ENCODE measurements at regions of chr15 and their contacts with region 1.

Region 1: DNA sequence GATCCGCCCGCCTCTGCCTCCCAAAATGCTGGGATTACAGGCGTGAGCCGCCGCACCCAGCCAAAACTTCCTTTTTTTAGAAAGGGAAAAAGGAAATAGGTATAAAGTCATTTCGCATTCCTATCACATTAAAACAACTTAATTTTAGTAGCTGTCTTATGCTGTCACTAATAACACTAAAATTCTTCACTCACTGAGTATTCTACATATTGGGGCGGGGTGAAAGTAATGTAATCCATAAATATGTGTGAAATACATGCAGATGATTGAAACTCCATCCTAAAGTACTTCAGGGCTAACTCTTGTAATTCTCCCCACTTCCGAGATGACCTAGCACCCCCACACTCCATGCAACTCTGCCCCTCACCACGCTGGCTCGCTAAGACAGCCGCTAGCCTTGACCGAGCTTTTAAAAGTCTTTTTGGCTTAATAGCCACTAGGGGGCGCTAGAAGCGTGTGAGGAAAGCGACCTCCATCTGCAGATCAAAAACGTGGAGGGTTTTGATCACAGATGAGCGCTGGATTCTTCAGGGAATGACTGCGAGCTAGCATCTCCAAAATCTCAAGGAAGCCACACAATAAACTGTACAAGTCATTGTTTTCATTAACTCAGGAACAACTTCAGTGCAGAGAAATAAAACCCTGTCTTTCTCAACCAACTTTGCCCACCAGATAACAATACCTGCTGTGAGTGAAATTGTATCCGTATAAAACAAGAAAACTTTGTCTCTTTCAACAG is 129.3 kb upstream of the IGF1R start:
- DNase-seq: peak; percentile 56
- H3K4me3 Mint-ChIP-seq: no peak overlapping the region
- H3K27ac Mint-ChIP-seq: no peak overlapping the region
- H3K4me1 Mint-ChIP-seq: peaks cover 4% of the 10 kb centered on the region
- H3K27me3 Mint-ChIP-seq: peaks cover 4% of the 10 kb centered on the region

Region 2: GRCh38 chr15:97189162-97189780 is 1329.7 kb before region 1 on chr15:
- CTCF ChIA-PET with region 1: no interaction called
- POLR2A ChIA-PET with region 1: no interaction called
- intact Hi-C with region 1: no loop called
- DNase-seq: no peak
- H3K4me3 Mint-ChIP-seq: no peak overlapping the region
- H3K27ac Mint-ChIP-seq: no peak overlapping the region
- H3K4me1 Mint-ChIP-seq: no peaks in the 10 kb centered on the region
- H3K27me3 Mint-ChIP-seq: no peaks in the 10 kb centered on the region

Region 3: DNA sequence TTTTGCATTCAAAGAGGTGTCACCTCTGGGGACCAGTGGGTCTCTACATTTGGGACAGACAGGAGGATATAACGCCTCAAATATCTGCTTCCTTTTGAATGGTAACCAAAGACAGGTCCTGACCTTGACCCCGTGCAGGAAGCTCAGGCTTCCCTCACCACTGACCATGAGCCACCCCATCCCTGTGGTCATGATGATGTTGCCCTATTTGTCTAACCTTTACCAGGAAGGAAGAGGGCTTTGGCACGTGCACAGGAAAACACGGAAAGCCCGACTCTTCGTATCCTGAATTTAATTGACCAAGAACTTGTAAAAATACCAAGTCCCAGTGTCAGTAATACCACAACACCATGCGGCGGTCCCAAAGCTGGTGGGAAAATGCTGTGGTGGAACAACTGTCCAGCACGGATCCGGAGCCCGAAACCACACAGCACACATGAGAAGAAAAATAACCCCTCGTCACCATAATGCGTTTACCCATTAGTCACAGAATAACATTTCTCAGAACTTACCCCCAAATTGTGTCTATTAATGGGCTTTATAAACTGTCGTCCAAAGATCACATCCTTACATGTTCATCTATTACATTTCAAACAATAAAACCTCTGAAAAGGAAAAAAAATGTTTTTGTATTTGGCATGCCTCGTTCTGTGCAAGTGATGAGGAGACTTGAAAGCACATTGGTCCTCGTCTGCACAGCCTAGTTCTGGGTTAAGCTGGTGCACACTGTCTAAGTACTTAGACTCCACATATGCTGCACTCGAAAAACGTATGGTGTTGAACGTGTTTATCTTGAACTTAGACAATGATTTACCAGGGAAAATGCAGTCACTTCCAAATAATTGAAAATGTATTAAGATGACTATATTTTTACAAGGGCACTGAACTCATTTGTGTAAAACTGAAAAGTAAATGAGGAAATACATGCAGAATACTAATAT is 10.5 kb after region 1 on chr15:
- CTCF ChIA-PET with region 1: interaction called, 16 read pairs
- POLR2A ChIA-PET with region 1: interaction called, 3 read pairs
- intact Hi-C with region 1: no loop called
- DNase-seq: no peak
- H3K4me3 Mint-ChIP-seq: no peak overlapping the region
- H3K27ac Mint-ChIP-seq: no peak overlapping the region
- H3K4me1 Mint-ChIP-seq: peaks cover 4% of the 10 kb centered on the region
- H3K27me3 Mint-ChIP-seq: peaks cover 18% of the 10 kb centered on the region

Region 4: DNA sequence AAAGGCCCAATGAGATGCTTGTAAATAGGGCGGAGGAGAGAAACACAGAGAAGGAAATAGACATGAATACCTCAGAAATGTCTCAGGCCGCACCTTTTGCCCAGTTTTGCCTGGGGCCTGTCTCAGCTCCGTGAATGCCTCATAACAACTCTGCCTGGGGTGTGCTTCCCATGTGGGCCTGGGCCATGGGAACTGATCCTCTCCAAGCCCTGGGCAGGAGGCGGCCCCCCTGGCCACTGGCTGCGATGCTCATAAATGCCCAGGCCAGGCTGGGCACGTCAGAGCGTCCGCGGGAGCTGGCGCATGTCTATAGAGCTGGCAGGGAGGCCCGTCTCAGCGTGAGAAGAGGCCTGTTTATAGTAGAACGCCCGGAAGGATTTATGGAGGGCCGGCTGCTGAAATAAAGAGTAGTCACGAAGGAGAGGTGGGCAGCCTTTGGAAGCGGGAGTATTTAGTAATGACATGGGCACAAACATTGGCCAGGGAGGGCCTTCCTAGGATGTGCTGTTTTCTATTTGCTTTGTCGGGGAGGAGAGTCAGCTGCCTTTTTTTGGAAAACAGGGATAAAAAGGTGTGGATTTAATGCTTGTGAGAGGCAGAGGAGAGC is 43.4 kb after region 1 on chr15:
- CTCF ChIA-PET with region 1: interaction called, 10 read pairs
- POLR2A ChIA-PET with region 1: no interaction called
- intact Hi-C with region 1: no loop called
- DNase-seq: no peak
- H3K4me3 Mint-ChIP-seq: no peak overlapping the region
- H3K27ac Mint-ChIP-seq: no peak overlapping the region
- H3K4me1 Mint-ChIP-seq: no peaks in the 10 kb centered on the region
- H3K27me3 Mint-ChIP-seq: peaks cover 7% of the 10 kb centered on the region

Region 5: GRCh38 chr15:98779463-98780071 is 260.6 kb after region 1 on chr15:
- CTCF ChIA-PET with region 1: interaction called, 3 read pairs
- POLR2A ChIA-PET with region 1: no interaction called
- intact Hi-C with region 1: loop called (anchors 10 kb)
- DNase-seq: peak; percentile 82
- H3K4me3 Mint-ChIP-seq: peak overlapping the region; percentile 21
- H3K27ac Mint-ChIP-seq: no peak overlapping the region
- H3K4me1 Mint-ChIP-seq: peaks cover 20% of the 10 kb centered on the region
- H3K27me3 Mint-ChIP-seq: peaks cover 2% of the 10 kb centered on the region

Region 6: DNA sequence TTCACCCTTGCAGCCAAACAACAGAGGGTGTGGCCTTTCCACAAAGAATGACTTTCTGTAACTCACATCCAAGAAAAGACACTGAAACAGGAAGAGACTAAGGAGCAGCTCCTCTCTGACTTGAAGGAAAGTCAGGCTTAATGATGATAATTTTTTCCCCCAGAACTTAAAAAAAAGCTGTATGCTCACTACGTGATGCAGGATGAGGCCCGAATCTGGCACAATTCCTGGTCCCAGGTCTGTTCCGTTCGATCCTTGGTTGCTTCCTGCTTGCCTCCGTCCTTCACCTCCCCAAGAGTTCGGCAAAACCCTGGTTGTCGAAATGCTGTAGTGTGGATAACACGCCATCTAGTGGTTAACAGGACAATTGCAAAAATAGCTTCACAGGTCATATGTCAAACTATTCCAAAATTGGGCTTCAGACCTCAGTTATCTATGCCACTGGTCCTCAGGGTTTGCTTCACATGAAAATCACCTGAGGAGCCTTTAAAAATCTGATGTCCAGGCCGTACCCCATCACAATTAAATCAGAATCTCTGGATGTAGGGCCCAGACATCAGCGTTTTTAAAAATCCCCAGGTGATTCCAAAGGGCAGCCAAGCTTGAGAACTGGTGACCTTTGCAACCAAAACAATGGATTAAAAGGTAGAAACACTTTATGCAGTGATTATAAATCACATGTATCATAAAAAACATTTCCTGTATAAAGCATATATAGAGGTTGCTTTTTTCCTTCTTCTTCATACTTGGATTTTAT is 557.7 kb after region 1 on chr15:
- CTCF ChIA-PET with region 1: interaction called, 24 read pairs
- POLR2A ChIA-PET with region 1: no interaction called
- intact Hi-C with region 1: loop called (anchors 5 kb)
- DNase-seq: peak; percentile 43
- H3K4me3 Mint-ChIP-seq: peak overlapping the region; percentile 70
- H3K27ac Mint-ChIP-seq: no peak overlapping the region
- H3K4me1 Mint-ChIP-seq: peaks cover 4% of the 10 kb centered on the region
- H3K27me3 Mint-ChIP-seq: peaks cover 9% of the 10 kb centered on the region